Activated naive CD4-positive, alpha-beta T cell treated with anti-CD3 and anti-CD28 coated beads for 36 hours (primary cell): ENCODE measurements at regions of chr14 and their contacts with region 1.

Region 1: GRCh38 chr14:97306760-97307246 is 509.6 kb downstream of the VRK1 start:
- DNase-seq: peak; percentile 43
- H3K4me3 Mint-ChIP-seq: no peak overlapping the region
- H3K27ac Mint-ChIP-seq: peak overlapping the region; percentile 90
- H3K4me1 Mint-ChIP-seq: peaks cover 28% of the 10 kb centered on the region
- H3K27me3 Mint-ChIP-seq: no peaks in the 10 kb centered on the region

Region 2: GRCh38 chr14:97329701-97330100 is 22.9 kb after region 1 on chr14:
- CTCF ChIA-PET with region 1: no interaction called
- intact Hi-C with region 1: loop called (anchors 2 kb)
- DNase-seq: no peak
- H3K4me3 Mint-ChIP-seq: no peak overlapping the region
- H3K27ac Mint-ChIP-seq: no peak overlapping the region
- H3K4me1 Mint-ChIP-seq: peaks cover 21% of the 10 kb centered on the region
- H3K27me3 Mint-ChIP-seq: no peaks in the 10 kb centered on the region

Region 3: DNA sequence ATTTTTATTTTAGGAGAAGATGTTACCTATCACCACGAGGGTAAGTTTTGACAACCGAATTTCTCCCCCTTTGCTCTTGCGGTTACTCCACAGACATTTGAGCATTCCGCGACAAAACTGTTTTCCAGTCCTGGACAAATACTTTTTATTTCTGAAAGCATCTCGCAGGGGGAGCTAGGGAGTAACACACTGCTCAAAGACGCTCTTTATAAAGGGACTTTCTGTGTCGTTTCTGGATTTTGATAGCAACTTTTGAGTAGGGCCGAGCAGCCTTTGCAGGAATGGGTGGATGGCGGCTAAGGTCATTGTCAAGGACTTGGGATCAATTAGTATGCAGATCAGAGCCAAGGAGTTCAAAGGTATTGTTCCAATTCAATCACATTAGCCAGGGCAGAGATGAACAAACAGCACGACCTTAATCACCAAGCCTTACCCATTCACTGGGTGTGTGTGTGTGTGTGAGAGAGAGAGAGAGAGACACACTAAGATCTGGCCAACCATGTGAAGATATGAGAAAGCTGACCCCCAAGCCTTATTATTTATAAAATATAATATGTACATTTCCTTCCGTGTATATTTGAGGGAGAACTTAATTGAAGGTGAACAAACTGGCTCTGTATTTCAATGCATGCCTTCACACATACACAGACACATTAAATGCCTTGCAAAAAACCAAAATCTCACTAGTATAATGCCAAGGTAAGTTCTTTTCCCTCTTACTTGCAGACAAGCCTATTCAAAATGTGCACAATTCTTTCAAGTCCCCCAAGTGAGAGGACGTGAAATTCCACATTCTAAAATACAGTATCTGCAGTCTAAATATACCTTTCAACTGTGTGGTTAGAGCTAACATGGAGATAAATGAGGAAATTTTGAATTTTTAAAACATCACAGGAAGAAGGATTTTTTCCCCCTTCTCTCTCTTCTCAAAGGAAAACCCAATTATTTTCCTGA is 104.1 kb after region 1 on chr14:
- CTCF ChIA-PET with region 1: no interaction called
- intact Hi-C with region 1: loop called (anchors 1 kb)
- DNase-seq: no peak
- H3K4me3 Mint-ChIP-seq: no peak overlapping the region
- H3K27ac Mint-ChIP-seq: no peak overlapping the region
- H3K4me1 Mint-ChIP-seq: peaks cover 29% of the 10 kb centered on the region
- H3K27me3 Mint-ChIP-seq: peaks cover 9% of the 10 kb centered on the region

Region 4: DNA sequence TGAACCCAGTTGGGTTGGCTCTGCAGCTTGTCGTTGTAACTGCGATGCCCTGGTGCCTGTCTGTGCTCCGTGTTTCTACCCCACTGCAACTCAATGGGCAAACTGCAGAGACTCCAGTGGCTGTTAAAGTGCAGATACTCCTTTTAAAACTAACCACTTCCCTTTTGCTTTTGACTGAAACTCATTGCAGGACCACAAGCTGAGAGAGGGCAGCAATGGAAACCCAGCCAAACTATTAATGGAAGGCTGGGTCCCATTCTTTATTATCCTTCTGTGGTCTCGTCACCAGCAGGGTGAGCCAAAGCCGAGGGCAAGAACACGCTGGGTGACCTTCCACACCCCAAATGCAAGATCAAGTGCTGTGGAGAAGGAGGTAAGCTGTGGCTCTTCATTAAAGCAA is 400.8 kb after region 1 on chr14:
- CTCF ChIA-PET with region 1: no interaction called
- intact Hi-C with region 1: loop called (anchors 5 kb)
- DNase-seq: peak; percentile 47
- H3K4me3 Mint-ChIP-seq: no peak overlapping the region
- H3K27ac Mint-ChIP-seq: no peak overlapping the region
- H3K4me1 Mint-ChIP-seq: peaks cover 92% of the 10 kb centered on the region
- H3K27me3 Mint-ChIP-seq: no peaks in the 10 kb centered on the region

Region 5: GRCh38 chr14:97866663-97867062 is 559.9 kb after region 1 on chr14:
- CTCF ChIA-PET with region 1: no interaction called
- intact Hi-C with region 1: loop called (anchors 2 kb)
- DNase-seq: peak; percentile 25
- H3K4me3 Mint-ChIP-seq: no peak overlapping the region
- H3K27ac Mint-ChIP-seq: peak overlapping the region; percentile 61
- H3K4me1 Mint-ChIP-seq: peaks cover 15% of the 10 kb centered on the region
- H3K27me3 Mint-ChIP-seq: no peaks in the 10 kb centered on the region